GM10248 (cell line): ENCODE measurements at regions of chr2 and their contacts with region 1.

Region 1: DNA sequence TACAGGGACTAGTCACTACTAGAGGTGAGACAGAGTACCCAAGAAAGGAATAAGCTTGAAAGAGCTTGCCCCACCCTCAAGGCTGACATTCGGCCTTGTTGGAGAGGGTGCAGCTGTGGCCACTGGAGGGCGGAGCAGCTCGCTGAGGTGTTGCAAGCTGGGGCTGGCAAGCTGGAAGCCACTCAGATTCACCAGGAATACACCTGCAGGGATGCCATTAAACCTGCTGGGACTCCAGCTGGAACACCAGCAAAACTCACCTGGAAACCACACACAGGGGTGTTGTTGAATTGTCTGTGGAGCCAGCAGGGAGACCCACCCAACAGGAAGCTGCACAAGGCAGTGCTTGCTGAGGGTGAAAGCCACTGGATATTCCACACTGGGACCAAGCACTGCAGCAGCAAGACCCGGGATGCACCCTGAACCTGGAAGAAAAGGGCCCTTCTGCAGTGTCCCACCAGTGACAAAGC is 26.1 kb downstream of the KCTD18 start:
- DNase-seq: peak; percentile 52
- CTCF ChIP-seq: peak; percentile 80

Region 2: GRCh38 chr2:199973703-199974102 is 510.1 kb before region 1 on chr2:
- CTCF ChIA-PET with region 1: interaction called, 82 read pairs
- POLR2A ChIA-PET with region 1: no interaction called
- DNase-seq: no peak
- CTCF ChIP-seq: peak; percentile 43

Region 3: GRCh38 chr2:199985625-199986207 is 498.0 kb before region 1 on chr2:
- CTCF ChIA-PET with region 1: interaction called, 82 read pairs
- POLR2A ChIA-PET with region 1: no interaction called
- DNase-seq: no peak
- CTCF ChIP-seq: peak; percentile 41

Region 4: GRCh38 chr2:200148366-200148765 is 335.4 kb before region 1 on chr2:
- CTCF ChIA-PET with region 1: no interaction called
- POLR2A ChIA-PET with region 1: no interaction called
- DNase-seq: no peak
- CTCF ChIP-seq: no peak

Region 5: GRCh38 chr2:200471324-200471848 is 12.4 kb before region 1 on chr2:
- CTCF ChIA-PET with region 1: interaction called, 72 read pairs
- POLR2A ChIA-PET with region 1: no interaction called
- DNase-seq: peak; percentile 73
- CTCF ChIP-seq: peak; percentile 62

Region 6: GRCh38 chr2:200509612-200510433 is 26.1 kb after region 1 on chr2 and contains the start of gene KCTD18:
- CTCF ChIA-PET with region 1: interaction called, 18 read pairs
- POLR2A ChIA-PET with region 1: no interaction called
- DNase-seq: peak; percentile 98
- CTCF ChIP-seq: peak; percentile 91

Region 7: GRCh38 chr2:200525882-200526651 is 42.3 kb after region 1 on chr2 and contains the start of gene SGO2:
- CTCF ChIA-PET with region 1: interaction called, 11 read pairs
- POLR2A ChIA-PET with region 1: no interaction called
- DNase-seq: peak; percentile 97
- CTCF ChIP-seq: no peak

Region 8: GRCh38 chr2:200567932-200568331 is 84.2 kb after region 1 on chr2:
- CTCF ChIA-PET with region 1: no interaction called
- POLR2A ChIA-PET with region 1: no interaction called
- DNase-seq: no peak
- CTCF ChIP-seq: no peak